SK-N-SH (cell line): ENCODE measurements at regions of chr18 and their contacts with region 1.

Region 1: DNA sequence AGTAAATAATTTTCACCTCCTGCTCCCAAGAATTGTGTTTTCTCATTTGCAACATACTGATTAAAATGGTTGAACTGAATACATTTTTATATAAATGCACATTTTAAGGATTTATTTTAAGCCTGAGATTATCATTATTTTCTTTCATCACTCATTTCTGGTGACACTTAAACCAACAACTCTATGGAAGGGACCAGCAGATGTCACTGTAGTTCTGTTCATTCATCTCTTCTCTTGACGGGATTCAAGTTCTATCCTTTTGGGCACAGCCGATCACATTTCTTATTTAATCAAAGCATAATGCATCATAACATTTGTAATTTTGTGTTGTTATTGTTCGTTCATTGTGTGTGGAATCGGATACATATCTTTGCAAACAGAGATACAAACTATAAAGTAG is 417.9 kb downstream of the HRH4 start:
- DNase-seq: peak; percentile 27
- H3K4me3 ChIP-seq: no peak overlapping the region
- H3K27ac ChIP-seq: no peak overlapping the region
- H3K4me1 ChIP-seq: no peaks in the 10 kb centered on the region; a peak in 2 of 4 replicates
- H3K27me3 ChIP-seq: no peaks in the 10 kb centered on the region; the same call in 1 of the 2 replicates
- CTCF ChIP-seq: peak; percentile 66
- EP300 ChIP-seq: no peak
- RAD21 ChIP-seq: peak; percentile 92

Region 2: DNA sequence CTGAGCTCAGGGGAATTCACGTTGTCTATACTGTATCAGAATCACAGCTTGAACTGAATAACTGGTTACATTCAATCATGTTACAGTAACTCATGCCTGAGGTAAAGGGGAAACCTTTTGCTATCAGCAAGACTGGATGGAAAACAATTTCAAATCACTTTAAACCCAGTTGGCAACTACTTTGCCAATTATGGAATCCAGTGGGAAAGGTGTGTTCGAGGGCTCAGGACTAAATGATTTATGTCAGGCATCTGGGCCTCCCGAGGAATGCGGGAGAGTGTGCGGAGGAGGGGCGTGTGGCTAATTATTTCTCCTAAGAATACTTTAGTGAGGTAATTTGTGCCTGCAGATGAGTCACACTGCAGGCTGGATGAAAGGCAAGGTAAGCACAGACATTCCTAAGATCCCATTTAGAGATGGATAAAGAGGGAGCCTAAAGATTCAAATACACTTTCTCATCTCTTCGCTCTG is 317.7 kb before region 1 on chr18:
- CTCF ChIA-PET with region 1: no interaction called
- POLR2A ChIA-PET with region 1: no interaction called
- DNase-seq: no peak
- H3K4me3 ChIP-seq: no peak overlapping the region
- H3K27ac ChIP-seq: no peak overlapping the region
- H3K4me1 ChIP-seq: no peaks in the 10 kb centered on the region
- H3K27me3 ChIP-seq: no peaks in the 10 kb centered on the region; the same call in 1 of the 2 replicates
- CTCF ChIP-seq: no peak
- EP300 ChIP-seq: no peak
- RAD21 ChIP-seq: no peak

Region 3: DNA sequence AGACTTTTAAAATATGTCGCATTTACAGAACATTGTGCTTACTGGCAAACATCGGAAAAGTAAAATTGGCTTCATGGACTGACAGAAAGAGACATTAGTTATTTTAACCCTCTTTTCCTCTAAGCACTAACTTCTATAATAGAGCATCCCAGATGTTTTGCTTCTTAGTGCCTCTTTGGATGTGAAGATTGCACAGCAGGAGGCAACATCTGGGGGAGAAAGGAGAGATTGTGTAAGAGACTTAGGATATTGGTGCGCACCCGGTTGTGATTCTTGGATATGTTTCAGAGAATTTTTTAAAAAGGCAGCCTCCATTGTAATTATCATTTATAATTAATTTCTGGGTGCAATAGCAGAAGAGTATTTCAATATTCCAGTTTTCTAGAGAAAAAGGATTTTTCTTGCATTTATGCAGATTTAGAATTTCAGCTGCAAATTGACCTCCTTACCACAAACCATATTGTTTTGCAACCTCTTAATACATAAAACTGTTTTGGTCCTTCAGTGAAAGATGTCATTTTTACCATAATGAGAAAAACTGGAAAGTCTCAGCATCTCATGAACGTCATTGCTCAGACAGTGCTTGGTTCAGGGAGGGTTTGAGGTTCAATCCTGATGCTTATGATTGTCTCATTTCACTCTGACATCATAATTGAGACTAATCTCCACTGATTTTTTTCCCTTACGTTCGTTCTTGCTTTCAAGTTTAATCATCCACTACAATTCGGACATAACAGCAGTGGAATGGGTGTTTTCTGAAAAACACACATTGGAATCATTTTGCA is 69.4 kb after region 1 on chr18:
- CTCF ChIA-PET with region 1: no interaction called
- POLR2A ChIA-PET with region 1: no interaction called
- DNase-seq: no peak
- H3K4me3 ChIP-seq: no peak overlapping the region
- H3K27ac ChIP-seq: no peak overlapping the region
- H3K4me1 ChIP-seq: no peaks in the 10 kb centered on the region; a peak in 1 of 4 replicates
- H3K27me3 ChIP-seq: no peaks in the 10 kb centered on the region
- CTCF ChIP-seq: no peak
- EP300 ChIP-seq: no peak
- RAD21 ChIP-seq: no peak

Region 4: DNA sequence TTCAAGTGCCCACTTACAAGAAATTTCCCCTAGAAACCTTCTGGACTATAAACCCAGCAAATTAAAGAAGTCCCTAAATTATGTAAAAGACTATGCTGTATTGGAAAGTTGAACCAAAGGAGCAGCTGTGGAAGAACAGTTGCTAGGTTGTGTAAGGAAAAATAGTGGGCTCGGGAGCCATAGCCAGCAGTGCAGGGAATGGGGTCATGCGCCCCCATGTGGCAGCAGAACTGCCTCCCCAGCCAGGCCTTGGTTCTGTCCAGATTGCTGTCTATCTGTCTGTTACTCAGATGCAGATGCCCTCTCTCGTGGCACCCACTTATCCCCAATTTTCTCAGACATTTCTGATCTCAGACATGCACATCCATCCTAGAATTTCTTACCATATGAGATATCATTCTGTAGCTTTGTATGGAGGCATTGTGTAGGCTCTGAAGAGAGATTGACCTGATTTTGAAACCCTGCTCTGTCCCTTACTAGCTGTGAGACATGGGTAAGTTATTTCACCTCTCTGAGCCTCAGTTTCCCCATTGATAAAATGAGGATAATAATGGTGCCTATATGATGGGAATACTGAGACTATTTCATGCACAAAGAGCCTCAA is 953.8 kb after region 1 on chr18:
- CTCF ChIA-PET with region 1: interaction called, 17 read pairs
- POLR2A ChIA-PET with region 1: no interaction called
- DNase-seq: peak; percentile 62
- H3K4me3 ChIP-seq: no peak overlapping the region; a peak in 1 of 4 replicates
- H3K27ac ChIP-seq: no peak overlapping the region
- H3K4me1 ChIP-seq: peaks cover 24 to 25% of the 10 kb centered on the region in 2 experiments
- H3K27me3 ChIP-seq: no peaks in the 10 kb centered on the region
- CTCF ChIP-seq: peak; percentile 89
- EP300 ChIP-seq: no peak
- RAD21 ChIP-seq: peak; percentile 87